Activated B cell treated with CpG ODN at 0.5 μM for 24 hours (primary cell): ENCODE measurements at regions of chr5 and their contacts with region 1.

Region 1: GRCh38 chr5:54243473-54244080 is 66.8 kb downstream of the ARL15 start:
- DNase-seq: no peak
- ATAC-seq: no peak
- H3K4me3 Mint-ChIP-seq: no peak overlapping the region
- H3K27ac Mint-ChIP-seq: no peak overlapping the region
- H3K4me1 Mint-ChIP-seq: peaks cover 2% of the 10 kb centered on the region
- H3K27me3 Mint-ChIP-seq: no peaks in the 10 kb centered on the region
- CTCF ChIP-seq: no peak

Region 2: GRCh38 chr5:54415896-54416601 is 172.5 kb after region 1 on chr5:
- CTCF ChIA-PET with region 1: interaction called, 28 read pairs
- POLR2A ChIA-PET with region 1: no interaction called
- intact Hi-C with region 1: loop called (anchors 1 kb)
- DNase-seq: no peak
- ATAC-seq: no peak
- H3K4me3 Mint-ChIP-seq: no peak overlapping the region
- H3K27ac Mint-ChIP-seq: no peak overlapping the region
- H3K4me1 Mint-ChIP-seq: no peaks in the 10 kb centered on the region
- H3K27me3 Mint-ChIP-seq: peaks cover 16% of the 10 kb centered on the region
- CTCF ChIP-seq: no peak

Region 3: GRCh38 chr5:54492178-54492577 is 248.6 kb after region 1 on chr5:
- CTCF ChIA-PET with region 1: interaction called, 25 read pairs
- POLR2A ChIA-PET with region 1: no interaction called
- intact Hi-C with region 1: loop called (anchors 1 kb)
- DNase-seq: no peak
- ATAC-seq: no peak
- H3K4me3 Mint-ChIP-seq: no peak overlapping the region
- H3K27ac Mint-ChIP-seq: no peak overlapping the region
- H3K4me1 Mint-ChIP-seq: no peaks in the 10 kb centered on the region
- H3K27me3 Mint-ChIP-seq: peaks cover 9% of the 10 kb centered on the region
- CTCF ChIP-seq: no peak

Region 4: DNA sequence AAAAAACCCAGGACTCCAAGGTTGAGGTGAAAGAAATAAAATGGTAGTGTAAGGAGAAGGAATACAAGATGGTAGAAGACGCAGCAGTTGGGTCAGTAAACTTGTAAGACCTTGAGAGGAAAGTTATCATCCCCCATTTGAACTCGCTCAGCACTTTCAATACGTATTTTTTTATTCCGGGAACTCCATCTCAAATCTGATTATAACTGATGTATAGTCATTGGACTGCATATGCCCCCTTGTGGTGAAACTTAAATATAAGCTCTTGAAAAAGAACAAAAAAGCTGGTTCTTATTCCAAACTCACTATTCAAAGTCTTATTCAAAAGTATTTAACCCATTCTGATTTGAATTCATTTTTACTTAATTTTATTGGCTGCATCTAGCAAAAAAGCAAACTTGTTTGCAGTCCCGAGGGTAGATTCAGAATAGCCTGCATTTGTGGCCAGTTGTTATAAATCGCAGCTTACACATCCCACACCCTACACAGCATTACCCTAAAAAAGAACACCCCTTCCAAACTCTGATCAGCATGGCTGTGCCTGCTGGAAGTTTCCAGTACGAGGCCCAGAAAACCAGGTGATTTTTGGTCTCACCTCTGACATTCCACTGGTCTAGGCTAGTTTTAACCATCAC is 623.9 kb after region 1 on chr5:
- CTCF ChIA-PET with region 1: interaction called, 11 read pairs
- POLR2A ChIA-PET with region 1: no interaction called
- intact Hi-C with region 1: loop called (anchors 1 kb)
- DNase-seq: no peak
- ATAC-seq: peak; percentile 77
- H3K4me3 Mint-ChIP-seq: peak overlapping the region; percentile 53
- H3K27ac Mint-ChIP-seq: no peak overlapping the region
- H3K4me1 Mint-ChIP-seq: peaks cover 4% of the 10 kb centered on the region
- H3K27me3 Mint-ChIP-seq: peaks cover 29% of the 10 kb centered on the region
- CTCF ChIP-seq: no peak

Region 5: DNA sequence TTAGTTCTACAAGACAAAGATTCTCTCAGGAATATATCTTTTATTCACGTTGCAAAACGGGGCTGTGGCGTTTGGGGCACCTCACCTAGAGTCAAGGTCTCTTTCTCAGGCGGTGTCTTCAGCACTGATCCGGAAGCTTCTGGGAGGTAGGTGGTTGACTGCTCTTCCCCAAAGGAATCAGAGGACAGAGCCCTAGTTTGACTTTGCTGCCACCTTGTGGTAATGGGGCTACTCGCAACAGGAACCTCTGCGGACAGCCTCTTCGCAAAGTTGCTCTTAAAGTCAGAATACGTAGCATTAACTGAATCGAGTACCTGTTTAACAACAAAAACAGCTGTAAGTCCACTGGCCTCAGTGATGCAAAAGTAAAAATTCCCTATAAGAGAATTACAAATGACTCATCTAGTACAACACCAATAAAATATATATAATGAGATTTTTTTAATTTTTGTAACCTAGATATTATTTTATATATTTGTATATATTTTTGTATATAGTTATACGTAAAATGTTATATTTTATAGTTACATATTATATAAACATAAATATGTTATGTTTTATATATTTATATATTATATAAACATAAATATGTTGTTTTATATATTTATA is 903.1 kb after region 1 on chr5:
- CTCF ChIA-PET with region 1: no interaction called
- POLR2A ChIA-PET with region 1: no interaction called
- intact Hi-C with region 1: loop called (anchors 1 kb)
- DNase-seq: peak; percentile 35
- ATAC-seq: peak; percentile 58
- H3K4me3 Mint-ChIP-seq: no peak overlapping the region
- H3K27ac Mint-ChIP-seq: no peak overlapping the region
- H3K4me1 Mint-ChIP-seq: no peaks in the 10 kb centered on the region
- H3K27me3 Mint-ChIP-seq: peaks cover 14% of the 10 kb centered on the region
- CTCF ChIP-seq: peak; percentile 94